ENCODE measurements at regions of chr18 and their contacts with region 1.

Region 1: DNA sequence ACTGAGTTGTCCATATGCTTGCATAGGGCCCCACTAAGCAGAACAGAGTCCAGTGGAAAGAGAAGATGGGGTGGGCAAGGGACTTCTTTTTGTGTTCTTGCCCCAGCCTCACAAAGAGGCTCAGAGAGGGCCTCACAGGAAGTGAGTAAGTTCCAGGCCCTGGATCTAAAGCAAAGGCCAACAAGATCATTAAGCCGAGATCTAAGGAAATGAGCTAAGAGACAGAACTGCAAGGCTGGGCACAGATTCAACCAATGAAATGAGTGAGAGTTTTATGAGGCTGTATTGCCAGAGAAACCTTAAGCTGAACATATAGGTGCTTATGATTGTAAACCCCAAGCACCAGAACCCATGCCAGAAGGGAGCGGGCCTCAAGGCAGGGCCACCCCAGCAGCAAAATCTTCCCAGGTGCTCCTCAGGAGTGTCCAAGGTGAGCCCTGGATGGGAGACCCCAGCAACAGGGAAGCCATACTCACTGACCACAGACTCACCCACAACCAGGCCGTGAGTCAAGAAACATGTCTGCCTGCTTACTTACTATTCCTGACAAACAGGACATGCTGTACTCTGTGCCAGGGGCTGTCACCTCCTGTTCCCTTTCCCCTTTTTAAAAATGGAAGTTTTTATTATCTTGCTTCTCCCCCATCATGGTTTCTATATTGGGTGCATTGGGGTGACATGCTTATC is 40.2 kb downstream of the SLC14A1 start:
- DNase-seq: no peak

Region 2: DNA sequence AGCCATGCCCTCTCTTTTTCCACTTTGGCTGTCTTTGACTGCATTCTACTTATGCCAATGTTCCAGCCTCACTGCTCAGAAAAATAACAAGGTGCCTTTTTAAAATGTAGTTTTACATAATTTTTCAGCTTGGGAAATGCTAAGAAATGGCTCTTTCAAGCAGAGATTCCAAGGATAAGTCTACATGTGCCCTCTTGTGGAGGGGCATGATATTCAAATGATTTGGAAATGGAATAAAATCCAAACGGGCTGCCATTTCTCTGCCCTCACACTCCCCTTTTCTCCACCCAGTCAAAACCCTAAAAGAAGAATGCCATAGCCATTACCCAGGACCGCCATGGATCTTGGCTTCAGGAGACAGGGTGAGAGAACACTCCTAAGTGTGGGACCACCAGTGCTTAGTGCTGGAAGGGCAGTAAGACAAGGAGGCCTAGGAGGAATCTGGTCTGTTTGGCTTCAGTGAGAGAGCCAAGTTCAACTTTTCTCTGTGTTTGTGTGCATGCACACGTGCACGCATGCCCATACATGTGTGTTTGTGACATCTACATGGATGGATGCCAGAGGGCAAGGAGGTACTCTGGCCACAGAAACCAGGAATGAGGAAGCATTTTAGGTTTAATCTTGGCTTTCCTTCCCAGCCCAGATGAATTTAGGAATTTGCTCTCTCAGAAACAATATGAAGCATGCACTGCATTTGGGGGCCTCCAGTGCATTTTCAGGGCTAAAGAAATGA is 322.9 kb before region 1 on chr18:
- intact Hi-C with region 1: no loop called
- DNase-seq: no peak

Region 3: GRCh38 chr18:45728336-45729010 is 35.7 kb before region 1 on chr18:
- intact Hi-C with region 1: loop called (anchors 5 kb)
- DNase-seq: no peak